ENCODE measurements at regions of chr4 and their contacts with region 1.

Region 1: DNA sequence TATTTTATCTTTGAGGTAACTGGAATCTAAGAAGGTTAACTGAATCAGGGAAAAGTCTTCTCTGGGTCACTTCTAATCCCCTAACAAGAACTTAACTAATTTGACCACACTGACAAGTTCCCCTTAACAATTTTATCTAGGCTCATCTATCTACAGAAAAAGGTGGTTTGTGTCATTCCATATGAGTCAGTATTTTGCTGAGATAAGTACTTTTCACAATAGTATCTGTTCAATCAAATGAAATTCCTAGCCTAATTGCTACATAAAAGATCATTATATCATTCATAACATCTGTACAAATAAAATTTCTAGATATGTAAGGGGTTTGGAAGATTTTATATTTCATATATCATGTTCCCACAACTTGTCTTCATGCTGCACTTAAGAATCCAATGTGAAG is 45.6 kb downstream of the COL25A1 start:
- DNase-seq: no peak
- H3K4me3 ChIP-seq: no peak overlapping the region
- H3K27ac ChIP-seq: no peak overlapping the region
- H3K4me1 ChIP-seq: no peaks in the 10 kb centered on the region
- H3K27me3 ChIP-seq: no peaks in the 10 kb centered on the region
- CTCF ChIP-seq: no peak
- EP300 ChIP-seq: no peak
- POLR2A ChIP-seq: no peak

Region 2: GRCh38 chr4:108087293-108087967 is 1169.4 kb before region 1 on chr4:
- intact Hi-C with region 1: loop called in 1 of 4 experiments (anchors 5 kb)
- DNase-seq: no peak
- H3K4me3 ChIP-seq: no peak overlapping the region
- H3K27ac ChIP-seq: no peak overlapping the region
- H3K4me1 ChIP-seq: no peaks in the 10 kb centered on the region
- H3K27me3 ChIP-seq: no peaks in the 10 kb centered on the region
- CTCF ChIP-seq: no peak
- EP300 ChIP-seq: no peak
- POLR2A ChIP-seq: no peak

Measured in ovary (tissue), 10 donors.